WTC11 (cell line): ENCODE measurements at regions of chr10 and their contacts with region 1.

Region 1: DNA sequence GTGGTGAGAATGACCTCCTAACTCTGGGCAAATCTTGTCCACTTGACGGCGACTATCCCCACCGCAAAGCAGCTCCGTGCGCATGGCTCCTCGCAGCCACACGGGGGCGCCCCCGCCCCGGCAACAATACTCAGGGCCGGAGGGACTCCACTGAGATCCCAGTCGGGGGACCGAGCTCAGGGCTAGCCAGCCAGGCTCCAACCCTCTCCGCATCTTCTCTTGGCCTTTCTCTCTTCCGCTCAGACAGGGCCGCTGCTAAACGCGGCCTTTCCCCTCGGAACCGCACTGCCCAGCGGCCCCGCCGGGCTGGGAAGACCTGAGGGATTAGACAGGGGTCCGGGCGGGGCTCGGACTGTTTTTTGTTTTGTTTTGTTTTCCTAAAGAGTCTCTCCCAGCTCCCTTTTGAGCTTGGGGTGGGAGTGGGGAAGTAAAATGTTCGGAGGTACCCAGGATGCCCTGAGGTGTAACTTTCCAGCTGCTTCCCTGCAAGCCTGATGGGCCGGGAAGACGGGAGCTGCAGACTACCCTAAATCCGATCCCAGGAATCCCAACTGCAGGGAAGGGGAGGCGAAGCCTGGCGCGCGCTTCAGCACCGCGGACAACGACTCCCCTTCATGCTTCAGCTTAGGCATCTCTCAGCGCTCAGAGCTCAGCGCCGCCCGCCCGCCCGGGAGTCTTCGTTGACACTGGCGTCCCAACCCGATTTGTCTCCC is 2.7 kb downstream of the KCNIP2 start:
- DNase-seq: peak; percentile 94
- ATAC-seq: peak; percentile 54
- H3K4me3 Mint-ChIP-seq: peak overlapping the region; percentile 91
- H3K27ac Mint-ChIP-seq: peak overlapping the region; percentile 79; the same call in 1 of the 2 replicates
- H3K4me1 Mint-ChIP-seq: peaks cover 38% of the 10 kb centered on the region
- H3K27me3 Mint-ChIP-seq: peaks cover 25% of the 10 kb centered on the region
- CTCF ChIP-seq: peak; percentile 93

Region 2: DNA sequence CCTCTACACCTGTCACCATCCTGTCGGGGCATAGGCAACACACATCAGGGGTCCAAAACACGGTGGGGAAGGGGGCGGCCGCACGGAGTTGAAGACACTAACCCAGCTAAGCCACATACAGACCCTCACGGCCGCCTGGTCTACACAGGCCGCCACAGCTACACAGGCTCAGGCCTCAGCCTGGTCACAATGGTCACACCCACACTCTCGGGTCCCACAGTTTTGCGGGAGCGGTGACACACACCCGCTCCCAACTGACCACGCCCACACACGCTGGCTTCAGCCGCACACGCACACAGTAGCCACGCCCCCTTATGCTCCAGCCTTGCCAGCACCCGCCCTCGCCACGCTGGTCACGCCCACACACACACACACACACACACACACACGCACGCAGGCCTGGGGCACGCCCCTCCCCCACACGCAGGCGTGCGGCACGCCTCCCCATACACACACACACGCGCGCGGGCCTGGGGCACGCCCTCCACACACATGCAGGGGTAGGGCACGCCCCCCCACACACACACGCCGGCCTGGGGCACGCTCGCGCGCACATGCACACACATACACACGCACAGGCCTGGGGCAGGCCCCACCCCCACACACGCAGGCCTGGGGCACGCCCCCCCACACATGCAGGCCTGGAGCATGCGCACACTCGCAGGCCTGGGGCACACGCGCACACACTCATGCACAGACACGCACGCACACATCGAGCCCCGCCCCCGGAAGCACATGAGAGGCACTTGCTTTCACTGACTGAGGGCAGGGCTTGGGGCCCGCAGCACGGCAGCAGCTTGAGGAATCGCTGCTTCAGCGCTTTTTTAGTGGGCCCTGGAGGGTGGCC is 10.4 kb before region 1 on chr10:
- CTCF ChIA-PET with region 1: interaction called, 64 read pairs
- POLR2A ChIA-PET with region 1: interaction called, 4 read pairs
- DNase-seq: peak; percentile 85
- ATAC-seq: peak; percentile 57
- H3K4me3 Mint-ChIP-seq: peak overlapping the region; percentile 78
- H3K27ac Mint-ChIP-seq: peak overlapping the region; percentile 82
- H3K4me1 Mint-ChIP-seq: peaks cover 26% of the 10 kb centered on the region
- H3K27me3 Mint-ChIP-seq: peaks cover 3% of the 10 kb centered on the region
- CTCF ChIP-seq: no peak

Region 3: GRCh38 chr10:101889256-101890210 is 48.6 kb after region 1 on chr10:
- CTCF ChIA-PET with region 1: interaction called, 68 read pairs
- POLR2A ChIA-PET with region 1: interaction called, 3 read pairs
- DNase-seq: peak; percentile 90
- ATAC-seq: peak; percentile 91
- H3K4me3 Mint-ChIP-seq: no peak overlapping the region
- H3K27ac Mint-ChIP-seq: no peak overlapping the region
- H3K4me1 Mint-ChIP-seq: no peaks in the 10 kb centered on the region
- H3K27me3 Mint-ChIP-seq: no peaks in the 10 kb centered on the region
- CTCF ChIP-seq: peak; percentile 75; the same call in 1 of the 2 replicates

Region 4: GRCh38 chr10:101961591-101962498 is 120.9 kb after region 1 on chr10:
- CTCF ChIA-PET with region 1: interaction called, 11 read pairs
- POLR2A ChIA-PET with region 1: interaction called, 3 read pairs
- DNase-seq: no peak
- ATAC-seq: no peak
- H3K4me3 Mint-ChIP-seq: no peak overlapping the region
- H3K27ac Mint-ChIP-seq: no peak overlapping the region
- H3K4me1 Mint-ChIP-seq: no peaks in the 10 kb centered on the region
- H3K27me3 Mint-ChIP-seq: no peaks in the 10 kb centered on the region
- CTCF ChIP-seq: no peak

Region 5: GRCh38 chr10:102009801-102010425 is 169.0 kb after region 1 on chr10:
- CTCF ChIA-PET with region 1: interaction called, 304 read pairs
- POLR2A ChIA-PET with region 1: interaction called, 4 read pairs
- DNase-seq: peak; percentile 31
- ATAC-seq: peak; percentile 96
- H3K4me3 Mint-ChIP-seq: no peak overlapping the region
- H3K27ac Mint-ChIP-seq: peak overlapping the region; percentile 1; the same call in 1 of the 2 replicates
- H3K4me1 Mint-ChIP-seq: peaks cover 21% of the 10 kb centered on the region
- H3K27me3 Mint-ChIP-seq: no peaks in the 10 kb centered on the region
- CTCF ChIP-seq: peak; percentile 53

Region 6: DNA sequence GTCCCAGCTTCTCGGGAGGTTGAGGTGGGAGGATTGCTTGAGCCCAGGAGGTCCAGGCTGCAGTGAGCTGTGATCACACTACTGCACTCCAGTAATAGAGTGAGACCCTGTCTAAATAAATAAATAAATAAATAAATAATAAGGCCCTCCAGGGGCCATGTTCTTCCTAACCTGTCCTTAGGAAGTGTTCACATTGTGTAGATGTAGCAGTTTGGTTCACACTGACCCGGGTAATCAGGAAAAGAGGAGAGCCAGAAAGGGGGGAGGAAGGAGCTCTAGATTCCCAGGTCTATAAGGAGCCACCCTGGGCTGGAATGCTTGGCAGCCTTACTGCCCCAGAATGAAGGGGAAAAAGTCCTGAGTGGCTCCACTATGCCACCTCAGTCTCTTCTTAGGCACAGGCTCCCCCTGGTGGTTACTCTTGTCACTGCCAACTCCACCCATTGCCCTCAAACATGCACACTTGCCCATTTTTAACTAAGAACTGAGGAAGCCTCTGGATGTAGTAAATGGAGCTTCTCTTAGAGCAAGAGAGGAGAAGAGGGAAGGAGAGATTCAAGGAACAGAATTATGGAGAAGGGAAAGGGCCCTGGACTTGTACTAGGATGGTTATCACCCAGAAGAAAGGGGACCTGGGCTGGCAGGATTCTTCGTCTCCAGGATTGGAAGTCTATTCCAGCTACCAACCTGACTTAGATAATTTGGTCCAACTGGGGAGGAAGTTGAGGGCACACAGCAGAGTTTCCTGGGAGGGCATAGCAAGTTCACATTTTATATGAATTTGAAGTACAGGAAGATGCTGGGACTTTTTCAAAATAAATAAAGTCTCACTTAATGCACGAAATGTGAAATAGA is 232.0 kb after region 1 on chr10:
- CTCF ChIA-PET with region 1: interaction called, 134 read pairs
- POLR2A ChIA-PET with region 1: no interaction called
- DNase-seq: peak; percentile 85
- ATAC-seq: peak; percentile 95
- H3K4me3 Mint-ChIP-seq: no peak overlapping the region
- H3K27ac Mint-ChIP-seq: no peak overlapping the region
- H3K4me1 Mint-ChIP-seq: no peaks in the 10 kb centered on the region
- H3K27me3 Mint-ChIP-seq: peaks cover 3% of the 10 kb centered on the region
- CTCF ChIP-seq: peak; percentile 94